OCI-LY7 (cell line): ENCODE measurements at regions of chr3 and their contacts with region 1.

Region 1: GRCh38 chr3:179562591-179563270 is at the start of gene ACTL6A:
- DNase-seq: peak; percentile 99
- H3K4me3 ChIP-seq: peak within 1 kb of the TSS; percentile 90
- H3K27ac ChIP-seq: peak within 1 kb of the TSS; percentile 76
- H3K4me1 ChIP-seq: peaks cover 39% of the 10 kb centered on the region
- CTCF ChIP-seq: no peak
- total RNA-seq, gene ACTL6A: 92.9 and 127 TPM in 2 replicates

Region 2: DNA sequence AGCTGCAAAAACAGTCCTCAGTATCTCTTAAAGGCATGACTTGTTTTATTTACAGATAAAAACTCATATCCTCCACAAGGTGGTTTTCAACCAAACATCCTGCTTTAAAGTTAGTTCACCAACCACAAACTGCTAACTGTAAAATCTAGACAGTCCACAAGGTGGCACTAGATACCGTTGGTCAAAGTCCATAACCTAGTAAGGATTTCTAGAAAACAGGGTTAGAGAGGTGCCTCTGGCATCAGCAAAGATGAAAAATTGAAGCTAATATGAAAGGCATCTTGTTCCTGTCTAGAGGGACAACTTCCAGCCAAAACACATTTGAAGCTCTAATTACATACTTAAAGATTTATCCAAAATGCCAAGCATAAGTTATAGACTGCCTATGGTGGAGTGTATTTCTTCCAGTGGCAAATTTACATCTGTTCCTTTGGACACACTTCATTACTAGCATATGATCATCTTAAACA is 547.1 kb before region 1 on chr3:
- CTCF ChIA-PET with region 1: no interaction called
- POLR2A ChIA-PET with region 1: interaction called, 5 read pairs
- intact Hi-C with region 1: loop called (anchors 2 kb)
- DNase-seq: peak; percentile 86
- H3K4me3 ChIP-seq: no peak overlapping the region
- H3K27ac ChIP-seq: no peak overlapping the region
- H3K4me1 ChIP-seq: peaks cover 41% of the 10 kb centered on the region
- CTCF ChIP-seq: peak; percentile 97

Region 3: GRCh38 chr3:179322286-179323196 is 240.2 kb before region 1 on chr3 and contains the start of gene ZNF639:
- CTCF ChIA-PET with region 1: interaction called, 5 read pairs
- POLR2A ChIA-PET with region 1: interaction called, 11 read pairs
- intact Hi-C with region 1: loop called (anchors 1 kb)
- DNase-seq: peak; percentile 95
- H3K4me3 ChIP-seq: peak within 1 kb of the TSS; percentile 90
- H3K27ac ChIP-seq: peak within 1 kb of the TSS; percentile 68
- H3K4me1 ChIP-seq: peaks cover 24% of the 10 kb centered on the region
- CTCF ChIP-seq: peak; percentile 84
- total RNA-seq, gene ZNF639: 44.3 and 61.3 TPM in 2 replicates

Region 4: GRCh38 chr3:179421500-179421899 is 141.2 kb before region 1 on chr3:
- CTCF ChIA-PET with region 1: no interaction called
- POLR2A ChIA-PET with region 1: interaction called, 3 read pairs
- intact Hi-C with region 1: loop called (anchors 1 kb)
- DNase-seq: peak; percentile 21
- H3K4me3 ChIP-seq: no peak overlapping the region
- H3K27ac ChIP-seq: no peak overlapping the region
- H3K4me1 ChIP-seq: no peaks in the 10 kb centered on the region
- CTCF ChIP-seq: peak; percentile 61

Region 5: GRCh38 chr3:179464323-179465089 is 98.2 kb before region 1 on chr3:
- CTCF ChIA-PET with region 1: interaction called, 4 read pairs
- POLR2A ChIA-PET with region 1: interaction called, 9 read pairs
- intact Hi-C with region 1: loop called (anchors 5 kb)
- DNase-seq: no peak
- H3K4me3 ChIP-seq: no peak overlapping the region
- H3K27ac ChIP-seq: no peak overlapping the region
- H3K4me1 ChIP-seq: peaks cover 31% of the 10 kb centered on the region
- CTCF ChIP-seq: no peak

Region 6: DNA sequence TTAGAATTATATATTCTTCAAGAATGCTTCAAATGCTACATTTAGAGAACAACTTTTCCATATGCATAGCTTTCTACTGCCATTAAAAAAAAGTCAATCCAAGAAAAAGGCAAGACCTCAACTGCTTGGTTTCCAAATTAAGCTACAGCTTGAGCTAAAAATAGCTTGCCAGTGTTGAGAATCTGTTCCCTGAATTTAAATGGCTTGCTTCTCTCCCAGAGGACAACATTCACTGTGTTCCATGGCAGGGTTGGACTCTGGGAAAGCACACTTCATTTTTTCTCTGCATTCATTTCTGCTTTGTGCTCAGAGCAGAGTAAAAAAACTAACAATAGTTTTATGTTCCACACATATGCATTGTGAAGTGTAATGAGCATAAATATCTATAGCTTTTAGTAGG is 50.4 kb before region 1 on chr3:
- CTCF ChIA-PET with region 1: no interaction called
- POLR2A ChIA-PET with region 1: no interaction called
- intact Hi-C with region 1: no loop called
- DNase-seq: no peak
- H3K4me3 ChIP-seq: no peak overlapping the region
- H3K27ac ChIP-seq: no peak overlapping the region
- H3K4me1 ChIP-seq: no peaks in the 10 kb centered on the region
- CTCF ChIP-seq: no peak

Region 7: DNA sequence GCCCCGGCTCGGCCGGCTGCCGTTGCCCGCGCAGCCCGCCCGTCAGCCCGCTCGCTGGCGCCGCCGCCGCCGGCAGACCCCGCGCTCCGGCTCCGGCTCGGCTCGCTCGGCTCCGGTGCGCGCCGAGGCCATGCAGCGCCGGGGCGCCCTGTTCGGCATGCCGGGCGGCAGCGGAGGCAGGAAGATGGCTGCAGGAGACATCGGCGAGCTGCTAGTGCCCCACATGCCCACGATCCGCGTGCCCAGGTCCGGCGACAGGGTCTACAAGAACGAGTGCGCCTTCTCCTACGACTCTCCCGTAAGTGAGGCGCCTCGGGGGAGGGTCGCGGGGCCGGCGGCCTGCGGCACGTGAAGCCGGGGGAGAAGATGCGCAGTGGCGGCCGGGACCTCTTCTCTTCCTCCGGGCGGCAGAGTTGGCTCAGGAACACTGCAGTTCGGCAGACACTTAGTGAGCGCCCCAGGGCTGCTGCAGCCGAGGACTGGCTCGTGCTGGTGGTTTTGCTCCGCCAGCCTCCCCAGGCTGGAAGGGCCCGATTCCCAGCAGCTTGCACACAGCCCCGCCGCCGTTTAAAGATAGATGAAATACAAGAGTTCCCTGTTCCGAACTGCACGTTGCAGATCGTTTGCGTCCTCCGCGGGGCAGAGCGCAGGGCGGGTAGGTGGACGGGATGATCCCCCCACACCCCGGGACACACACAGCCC is 90.5 kb after region 1 on chr3:
- CTCF ChIA-PET with region 1: no interaction called
- POLR2A ChIA-PET with region 1: interaction called, 3 read pairs
- intact Hi-C with region 1: loop called (anchors 2 kb)
- DNase-seq: peak; percentile 84
- H3K4me3 ChIP-seq: peak overlapping the region; percentile 96
- H3K27ac ChIP-seq: peak overlapping the region; percentile 81
- H3K4me1 ChIP-seq: peaks cover 32% of the 10 kb centered on the region
- CTCF ChIP-seq: peak; percentile 25; the same call in 1 of the 2 replicates